Mucosa of descending colon (tissue), 3 donors: ENCODE measurements at regions of chr2 and their contacts with region 1.

Region 1: DNA sequence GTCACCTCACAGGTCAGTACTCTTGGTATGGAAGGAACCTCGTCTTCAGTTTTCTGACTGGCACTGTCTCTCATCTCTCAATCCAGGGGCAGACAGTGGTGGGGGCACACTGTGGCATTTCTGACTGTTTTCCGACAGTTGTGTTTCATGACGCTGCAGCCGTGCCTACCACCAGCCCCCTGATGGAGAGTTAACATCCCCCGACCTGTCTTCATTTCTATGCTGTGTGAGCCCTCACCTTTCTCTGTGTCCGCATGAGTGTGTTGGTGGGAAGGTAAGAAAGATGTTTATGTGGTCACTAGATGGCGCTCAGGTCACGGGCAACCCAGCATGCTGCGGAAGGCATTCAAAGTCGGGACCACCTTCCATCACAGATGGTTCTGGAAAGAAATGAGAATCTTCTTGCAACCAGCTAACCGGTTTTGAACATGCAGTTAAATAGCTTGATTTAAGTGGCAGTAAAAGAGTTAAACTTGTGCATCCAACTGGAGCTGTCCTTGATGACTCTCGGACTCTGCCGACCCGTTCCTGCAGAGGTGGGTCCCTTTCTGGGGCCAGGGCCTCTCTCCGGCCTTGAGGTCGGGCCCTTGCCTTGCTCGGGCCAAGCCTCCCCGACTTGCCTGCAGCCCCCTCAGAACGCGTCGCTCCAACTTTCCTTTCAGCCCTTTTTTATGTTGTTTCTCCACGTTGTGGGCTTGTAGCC is 92.4 kb downstream of the DYSF start:
- DNase-seq: peak; percentile 22 to 67 (median 53)
- ATAC-seq: peak; percentile 81
- H3K4me3 ChIP-seq: no peak overlapping the region
- H3K4me1 ChIP-seq: peaks cover 6% of the 10 kb centered on the region
- CTCF ChIP-seq: peak; percentile 17

Region 2: DNA sequence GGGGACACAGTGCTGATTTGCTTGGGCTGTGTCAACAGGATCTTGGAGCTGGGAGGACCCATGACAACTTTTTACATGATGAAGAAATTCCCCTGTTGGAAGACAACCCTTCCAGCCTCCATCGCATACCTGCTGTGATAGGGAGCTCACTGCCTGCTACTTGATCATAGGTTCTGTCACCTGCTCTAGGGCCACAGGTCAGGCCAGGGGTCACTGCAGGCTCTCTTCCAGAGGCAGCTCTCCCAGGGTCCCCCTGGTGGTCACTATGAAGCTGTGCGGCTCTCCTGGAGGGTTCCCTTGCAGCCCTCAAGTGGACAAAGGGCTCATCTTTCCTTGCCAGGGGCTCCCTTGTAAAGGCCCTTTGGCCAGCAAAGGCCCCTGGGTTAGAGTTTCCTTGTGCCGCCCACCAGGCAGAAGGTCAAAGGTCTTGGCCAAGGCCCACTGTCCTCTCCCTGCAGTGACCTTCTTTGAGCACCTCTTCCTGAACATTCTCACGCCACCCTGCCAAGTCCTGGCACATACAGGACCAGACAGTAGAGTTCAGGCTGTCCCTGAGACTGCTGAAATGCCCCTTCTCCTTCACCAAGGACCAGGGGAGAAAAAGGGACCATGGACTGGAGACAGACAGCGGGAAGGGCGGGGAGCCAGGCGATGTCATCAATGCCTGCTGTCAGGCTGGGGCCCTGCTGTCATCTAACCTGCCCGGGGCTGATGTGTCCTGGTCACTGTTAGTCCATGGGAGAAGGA is 252.7 kb after region 1 on chr2:
- intact Hi-C with region 1: loop called in 1 of 2 experiments (anchors 5 kb)
- DNase-seq: peak in 2 of 3 donors; percentile 41 to 42
- ATAC-seq: peak; percentile 70
- H3K4me3 ChIP-seq: no peak overlapping the region
- H3K4me1 ChIP-seq: no peaks in the 10 kb centered on the region
- CTCF ChIP-seq: peak; percentile 61

Region 3: DNA sequence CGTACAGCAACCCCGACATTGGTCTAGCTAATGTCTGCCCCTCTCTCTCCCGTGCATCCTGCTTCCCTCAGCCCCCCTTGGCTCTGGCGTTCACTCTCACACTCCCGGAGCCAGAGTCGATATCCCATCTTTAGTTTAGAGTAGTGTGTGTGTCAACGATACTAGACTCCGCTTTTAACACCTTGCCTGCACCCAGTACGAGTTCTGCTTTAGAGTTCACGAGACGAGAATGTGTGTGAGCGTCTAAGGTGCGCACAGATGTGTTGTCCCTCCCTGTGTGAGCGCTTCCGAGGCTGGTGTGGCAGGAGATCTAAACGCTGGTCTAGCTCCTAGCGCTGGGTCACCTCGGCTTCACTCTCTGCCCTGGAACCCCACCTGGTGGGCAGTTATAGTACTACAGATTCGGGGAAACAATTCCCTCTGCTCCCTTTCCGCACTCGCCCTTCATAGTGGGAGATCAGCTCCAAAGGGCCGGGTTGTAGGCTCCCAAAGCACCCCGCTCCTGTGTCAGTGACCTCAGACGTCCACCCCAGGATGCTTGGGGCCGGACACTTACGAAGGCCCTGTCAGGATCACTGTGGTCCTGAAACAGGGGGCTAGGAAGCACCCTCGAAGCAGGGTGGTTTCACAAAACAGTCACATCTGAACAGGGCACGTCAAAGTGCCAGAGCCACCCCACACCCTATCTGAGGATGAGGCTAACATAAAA is 604.6 kb after region 1 on chr2:
- intact Hi-C with region 1: loop called (anchors 5 to 10 kb)
- DNase-seq: peak; percentile 64 to 88 (median 78)
- ATAC-seq: peak; percentile 92
- H3K4me3 ChIP-seq: no peak overlapping the region
- H3K4me1 ChIP-seq: peaks cover 42% of the 10 kb centered on the region
- CTCF ChIP-seq: peak; percentile 77

Region 4: GRCh38 chr2:72157871-72158771 is 612.4 kb after region 1 on chr2:
- intact Hi-C with region 1: loop called (anchors 5 to 10 kb)
- DNase-seq: no peak
- ATAC-seq: no peak
- H3K4me3 ChIP-seq: no peak overlapping the region
- H3K4me1 ChIP-seq: no peaks in the 10 kb centered on the region
- CTCF ChIP-seq: no peak